ENCODE measurements at regions of chr1 and their contacts with region 1.

Region 1: GRCh38 chr1:111755331-111756123 is at the start of gene DDX20:
- DNase-seq: peak; percentile 94 to 96 (median 95)
- H3K4me3 ChIP-seq: peak within 1 kb of the TSS; percentile 63 to 92
- H3K4me3 Mint-ChIP-seq: peak within 1 kb of the TSS; percentile 90 to 100 (median 98)
- H3K27ac ChIP-seq: peak within 1 kb of the TSS; percentile 93
- H3K27ac Mint-ChIP-seq: peak within 1 kb of the TSS; percentile 97 to 100 (median 99)
- H3K4me1 ChIP-seq: peaks cover 20% of the 10 kb centered on the region
- H3K4me1 Mint-ChIP-seq: peaks cover 26 to 36% (median 33%) of the 10 kb centered on the region in 4 donors
- H3K27me3 ChIP-seq: no peaks in the 10 kb centered on the region
- H3K27me3 Mint-ChIP-seq: peaks cover 0 to 2% of the 10 kb centered on the region in 2 donors
- total RNA-seq, gene DDX20: 22.2 to 26.0 TPM

Region 2: GRCh38 chr1:110963691-110964399 is 791.7 kb before region 1 on chr1 and contains the start of gene LRIF1:
- CTCF ChIA-PET with region 1: no interaction called
- POLR2A ChIA-PET with region 1: no interaction called
- intact Hi-C with region 1: loop called (anchors 2 kb)
- DNase-seq: peak; percentile 98 to 100 (median 100)
- H3K4me3 ChIP-seq: peak within 1 kb of the TSS; percentile 90 to 95
- H3K4me3 Mint-ChIP-seq: peak within 1 kb of the TSS; percentile 81 to 96 (median 92)
- H3K27ac ChIP-seq: peak within 1 kb of the TSS; percentile 96
- H3K27ac Mint-ChIP-seq: peak within 1 kb of the TSS; percentile 93 to 100 (median 98)
- H3K4me1 ChIP-seq: peaks cover 31% of the 10 kb centered on the region
- H3K4me1 Mint-ChIP-seq: peaks cover 20 to 35% (median 27%) of the 10 kb centered on the region in 4 donors
- H3K27me3 ChIP-seq: peaks cover 3% of the 10 kb centered on the region
- H3K27me3 Mint-ChIP-seq: peaks cover 8 to 10% of the 10 kb centered on the region in 2 donors
- total RNA-seq, gene LRIF1: 27.0 to 28.2 TPM

Region 3: DNA sequence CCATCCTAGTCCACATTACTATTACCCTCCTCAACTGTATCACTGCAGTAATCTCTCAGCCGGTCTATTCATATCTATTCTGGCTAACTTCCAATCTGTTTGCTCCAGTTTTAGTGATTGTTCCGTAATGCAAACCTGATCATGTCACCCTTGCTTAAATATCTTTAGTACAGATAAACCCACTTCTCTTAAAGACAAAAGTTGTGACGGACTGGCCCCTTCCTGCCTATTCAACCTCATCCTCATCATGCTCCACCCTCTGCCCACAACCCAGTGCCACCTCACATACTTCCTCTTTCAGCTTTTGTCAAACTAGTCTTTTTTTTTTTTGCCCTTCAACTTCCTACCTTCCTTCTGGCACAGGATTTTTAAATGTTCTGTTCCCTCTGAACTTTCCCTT is 284.5 kb before region 1 on chr1:
- CTCF ChIA-PET with region 1: interaction called, 3 read pairs
- POLR2A ChIA-PET with region 1: interaction called, 12 read pairs
- intact Hi-C with region 1: loop called (anchors 2 kb)
- DNase-seq: peak; percentile 84 to 95 (median 91)
- H3K4me3 ChIP-seq: peak overlapping the region; percentile 9 to 39
- H3K4me3 Mint-ChIP-seq: no peak overlapping the region
- H3K27ac ChIP-seq: peak overlapping the region; percentile 68
- H3K27ac Mint-ChIP-seq: no peak overlapping the region
- H3K4me1 ChIP-seq: peaks cover 80% of the 10 kb centered on the region
- H3K4me1 Mint-ChIP-seq: peaks cover 18 to 29% (median 25%) of the 10 kb centered on the region in 4 donors
- H3K27me3 ChIP-seq: no peaks in the 10 kb centered on the region
- H3K27me3 Mint-ChIP-seq: no peaks in the 10 kb centered on the region

Region 4: DNA sequence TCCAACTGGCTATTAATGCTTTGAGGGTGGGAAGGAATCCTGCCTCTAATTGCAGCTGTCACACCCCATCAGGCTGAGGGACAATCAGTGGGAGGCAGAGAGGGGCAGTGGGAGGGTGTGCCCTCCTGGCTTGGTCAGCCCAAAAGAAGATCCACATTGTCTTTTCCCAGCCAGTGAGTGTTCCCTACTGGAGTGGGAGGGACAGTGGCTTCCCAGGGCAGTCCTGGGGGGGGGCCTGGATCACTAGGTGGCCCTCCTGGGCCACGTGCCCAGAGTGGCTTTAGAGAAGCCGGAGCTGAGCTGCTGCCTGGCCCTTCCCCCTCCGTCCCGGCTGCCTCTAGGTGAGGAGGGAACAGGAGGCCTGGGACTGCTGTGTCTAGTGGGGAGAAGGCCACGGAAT is 30.3 kb before region 1 on chr1:
- CTCF ChIA-PET with region 1: no interaction called
- POLR2A ChIA-PET with region 1: interaction called, 7 read pairs
- intact Hi-C with region 1: loop called (anchors 2 kb)
- DNase-seq: no peak
- H3K4me3 ChIP-seq: no peak overlapping the region
- H3K4me3 Mint-ChIP-seq: no peak overlapping the region
- H3K27ac ChIP-seq: no peak overlapping the region
- H3K27ac Mint-ChIP-seq: peak overlapping the region in 6 of 7 donors; percentile 29 to 97 (median 92)
- H3K4me1 ChIP-seq: peaks cover 22% of the 10 kb centered on the region
- H3K4me1 Mint-ChIP-seq: peaks cover 20 to 39% (median 29%) of the 10 kb centered on the region in 4 donors
- H3K27me3 ChIP-seq: no peaks in the 10 kb centered on the region
- H3K27me3 Mint-ChIP-seq: no peaks in the 10 kb centered on the region

Region 5: DNA sequence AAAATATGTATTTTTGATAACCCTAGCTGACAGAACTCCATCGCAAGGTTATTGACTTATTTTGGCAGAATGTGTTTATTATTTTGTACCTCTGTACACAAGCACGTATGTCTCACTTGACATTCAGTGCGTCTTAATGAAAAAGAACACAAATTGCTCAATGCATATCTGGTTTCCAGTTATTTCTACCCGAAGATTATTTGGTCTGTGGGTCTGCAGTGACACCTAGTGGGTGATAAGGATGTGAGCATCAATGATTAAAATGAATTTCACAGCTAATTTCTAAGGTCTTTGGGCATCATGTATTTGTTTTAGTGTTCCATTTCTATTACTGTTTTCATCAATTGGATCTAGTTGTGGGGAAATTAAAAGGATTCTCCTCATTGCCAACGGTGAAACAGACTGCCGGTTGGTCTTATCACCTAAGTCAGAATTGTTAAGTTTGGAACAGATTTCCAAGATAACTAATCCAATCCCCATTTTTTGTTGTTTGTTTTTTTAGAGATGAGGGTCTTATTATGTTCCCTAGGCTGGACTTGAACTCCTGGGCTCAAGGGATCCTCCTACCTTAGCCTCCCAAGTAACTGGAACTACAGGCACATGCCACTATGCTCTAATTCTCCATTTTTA is 14.1 kb after region 1 on chr1:
- CTCF ChIA-PET with region 1: interaction called, 42 read pairs
- POLR2A ChIA-PET with region 1: interaction called, 7 read pairs
- intact Hi-C with region 1: no loop called
- DNase-seq: peak; percentile 54 to 64 (median 59)
- H3K4me3 ChIP-seq: no peak overlapping the region
- H3K4me3 Mint-ChIP-seq: no peak overlapping the region
- H3K27ac ChIP-seq: no peak overlapping the region
- H3K27ac Mint-ChIP-seq: peak overlapping the region in 5 of 7 donors; percentile 7 to 55 (median 38)
- H3K4me1 ChIP-seq: no peaks in the 10 kb centered on the region
- H3K4me1 Mint-ChIP-seq: peaks cover 0 to 3% (median under 1%) of the 10 kb centered on the region in 4 donors
- H3K27me3 ChIP-seq: no peaks in the 10 kb centered on the region
- H3K27me3 Mint-ChIP-seq: no peaks in the 10 kb centered on the region

Measured in CD4-positive, alpha-beta memory T cell (primary cell).